ENCODE measurements at regions of chr7 and their contacts with region 1.

Region 1: GRCh38 chr7:39948956-39949928 is 814 bp upstream of the CDK13 start:
- DNase-seq: peak; percentile 95 to 100 (median 98)
- ATAC-seq: peak; percentile 77
- H3K4me3 ChIP-seq: peak overlapping the region; percentile 93
- H3K4me3 Mint-ChIP-seq: peak overlapping the region; percentile 95
- H3K27ac ChIP-seq: peak overlapping the region; percentile 98 to 99
- H3K27ac Mint-ChIP-seq: peak overlapping the region; percentile 96
- H3K4me1 ChIP-seq: peaks cover 14% of the 10 kb centered on the region
- H3K4me1 Mint-ChIP-seq: peaks cover 44% of the 10 kb centered on the region
- H3K27me3 ChIP-seq: no peaks in the 10 kb centered on the region
- H3K27me3 Mint-ChIP-seq: no peaks in the 10 kb centered on the region
- CTCF ChIP-seq: no peak

Region 2: GRCh38 chr7:39580149-39580874 is 368.9 kb before region 1 on chr7:
- CTCF ChIA-PET with region 1: interaction called, 3 read pairs
- POLR2A ChIA-PET with region 1: interaction called, 3 read pairs
- intact Hi-C with region 1: loop called in 1 of 2 experiments (anchors 10 kb)
- DNase-seq: peak; percentile 60 to 92 (median 70)
- ATAC-seq: peak; percentile 96
- H3K4me3 ChIP-seq: no peak overlapping the region
- H3K4me3 Mint-ChIP-seq: no peak overlapping the region
- H3K27ac ChIP-seq: no peak overlapping the region
- H3K27ac Mint-ChIP-seq: no peak overlapping the region
- H3K4me1 ChIP-seq: no peaks in the 10 kb centered on the region
- H3K4me1 Mint-ChIP-seq: peaks cover 9% of the 10 kb centered on the region
- H3K27me3 ChIP-seq: no peaks in the 10 kb centered on the region
- H3K27me3 Mint-ChIP-seq: no peaks in the 10 kb centered on the region
- CTCF ChIP-seq: peak; percentile 75

Region 3: DNA sequence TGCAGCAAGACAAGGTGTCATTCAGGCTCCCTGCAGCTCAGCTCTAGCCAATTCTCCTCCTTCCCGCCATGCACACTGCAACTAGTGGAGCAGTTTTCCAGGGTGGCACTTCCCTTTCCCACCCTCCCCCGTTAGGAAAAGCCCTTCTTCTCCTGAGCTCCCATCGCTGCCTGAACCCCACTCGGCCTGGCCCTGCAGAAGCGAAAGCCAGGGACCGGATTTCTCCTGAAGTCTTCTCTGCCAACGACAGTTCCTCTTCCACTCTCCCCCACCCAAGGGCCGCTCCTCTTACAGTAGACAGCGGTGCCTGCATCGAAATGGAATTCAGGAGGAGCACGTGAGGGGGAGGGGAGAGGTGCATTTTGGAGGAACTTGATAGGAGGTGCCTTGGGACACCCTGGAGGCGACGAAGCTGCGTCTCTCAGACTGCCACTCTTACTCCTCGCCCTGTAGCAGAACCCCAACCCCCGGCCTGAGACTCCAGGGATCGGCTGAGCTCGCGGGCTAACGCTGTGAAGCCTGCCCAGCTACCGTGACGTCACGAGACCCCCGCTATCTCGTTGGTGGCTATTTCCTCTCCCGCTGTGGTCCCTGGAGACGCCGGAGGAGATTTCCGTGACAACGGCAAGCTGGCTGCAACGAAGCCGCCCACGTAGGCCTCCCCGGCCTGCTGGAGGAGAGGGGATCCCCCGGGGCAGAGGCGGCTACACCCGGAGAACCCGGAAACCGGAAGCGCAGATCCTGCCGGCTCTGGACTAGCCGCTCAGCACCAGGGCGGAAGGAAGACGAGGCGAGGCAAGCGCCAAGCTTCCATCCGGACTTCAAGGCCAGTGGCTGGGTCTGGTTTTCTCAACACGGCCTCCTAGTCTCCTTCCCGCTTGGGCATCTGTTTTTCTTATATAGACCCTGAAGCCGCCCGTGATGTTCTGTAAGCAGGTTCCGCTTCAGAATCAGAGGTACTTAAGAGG is 216.1 kb before region 1 on chr7:
- CTCF ChIA-PET with region 1: no interaction called
- POLR2A ChIA-PET with region 1: interaction called, 11 read pairs
- intact Hi-C with region 1: loop called (anchors 2 to 5 kb)
- DNase-seq: peak; percentile 80 to 99 (median 92)
- ATAC-seq: peak; percentile 91
- H3K4me3 ChIP-seq: peak overlapping the region; percentile 73
- H3K4me3 Mint-ChIP-seq: peak overlapping the region; percentile 97
- H3K27ac ChIP-seq: peak overlapping the region; percentile 71 to 89
- H3K27ac Mint-ChIP-seq: peak overlapping the region; percentile 96
- H3K4me1 ChIP-seq: peaks cover 42% of the 10 kb centered on the region
- H3K4me1 Mint-ChIP-seq: peaks cover 41% of the 10 kb centered on the region
- H3K27me3 ChIP-seq: no peaks in the 10 kb centered on the region
- H3K27me3 Mint-ChIP-seq: no peaks in the 10 kb centered on the region
- CTCF ChIP-seq: no peak

Region 4: GRCh38 chr7:39880556-39880955 is 68.7 kb before region 1 on chr7:
- CTCF ChIA-PET with region 1: no interaction called
- POLR2A ChIA-PET with region 1: no interaction called
- intact Hi-C with region 1: no loop called
- DNase-seq: no peak
- ATAC-seq: no peak
- H3K4me3 ChIP-seq: no peak overlapping the region
- H3K4me3 Mint-ChIP-seq: no peak overlapping the region
- H3K27ac ChIP-seq: no peak overlapping the region
- H3K27ac Mint-ChIP-seq: no peak overlapping the region
- H3K4me1 ChIP-seq: no peaks in the 10 kb centered on the region
- H3K4me1 Mint-ChIP-seq: no peaks in the 10 kb centered on the region
- H3K27me3 ChIP-seq: no peaks in the 10 kb centered on the region
- H3K27me3 Mint-ChIP-seq: peaks cover 14% of the 10 kb centered on the region
- CTCF ChIP-seq: no peak

Region 5: GRCh38 chr7:39979406-39980073 is 30.3 kb after region 1 on chr7:
- CTCF ChIA-PET with region 1: interaction called, 5 read pairs
- POLR2A ChIA-PET with region 1: interaction called, 48 read pairs
- intact Hi-C with region 1: loop called in 1 of 2 experiments (anchors 2 kb)
- DNase-seq: peak in 9 of 14 experiments; percentile 8 to 82 (median 26)
- ATAC-seq: peak; percentile 86
- H3K4me3 ChIP-seq: no peak overlapping the region
- H3K4me3 Mint-ChIP-seq: no peak overlapping the region
- H3K27ac ChIP-seq: peak overlapping the region in 1 of 2 donors; percentile 41
- H3K27ac Mint-ChIP-seq: no peak overlapping the region
- H3K4me1 ChIP-seq: peaks cover 30% of the 10 kb centered on the region
- H3K4me1 Mint-ChIP-seq: peaks cover 15% of the 10 kb centered on the region
- H3K27me3 ChIP-seq: no peaks in the 10 kb centered on the region
- H3K27me3 Mint-ChIP-seq: no peaks in the 10 kb centered on the region
- CTCF ChIP-seq: no peak

Region 6: GRCh38 chr7:40033826-40034225 is 84.6 kb after region 1 on chr7:
- CTCF ChIA-PET with region 1: interaction called, 3 read pairs
- POLR2A ChIA-PET with region 1: interaction called, 3 read pairs
- intact Hi-C with region 1: loop called in 1 of 2 experiments (anchors 5 kb)
- DNase-seq: no peak
- ATAC-seq: no peak
- H3K4me3 ChIP-seq: no peak overlapping the region
- H3K4me3 Mint-ChIP-seq: no peak overlapping the region
- H3K27ac ChIP-seq: no peak overlapping the region
- H3K27ac Mint-ChIP-seq: peak overlapping the region; percentile 37
- H3K4me1 ChIP-seq: no peaks in the 10 kb centered on the region
- H3K4me1 Mint-ChIP-seq: peaks cover 31% of the 10 kb centered on the region
- H3K27me3 ChIP-seq: no peaks in the 10 kb centered on the region
- H3K27me3 Mint-ChIP-seq: no peaks in the 10 kb centered on the region
- CTCF ChIP-seq: no peak

Region 7: GRCh38 chr7:40134428-40135316 is 185.4 kb after region 1 on chr7 and contains the starts of genes MPLKIP and SUGCT:
- CTCF ChIA-PET with region 1: interaction called, 17 read pairs
- POLR2A ChIA-PET with region 1: interaction called, 41 read pairs
- intact Hi-C with region 1: loop called (anchors 1 kb)
- DNase-seq: peak; percentile 77 to 94 (median 84)
- ATAC-seq: peak; percentile 89
- H3K4me3 ChIP-seq: peak within 1 kb of the TSS; percentile 92
- H3K4me3 Mint-ChIP-seq: peak within 1 kb of the TSS; percentile 100
- H3K27ac ChIP-seq: peak within 1 kb of the TSS; percentile 86 to 89
- H3K27ac Mint-ChIP-seq: peak within 1 kb of the TSS; percentile 97
- H3K4me1 ChIP-seq: peaks cover 15% of the 10 kb centered on the region
- H3K4me1 Mint-ChIP-seq: peaks cover 43% of the 10 kb centered on the region
- H3K27me3 ChIP-seq: no peaks in the 10 kb centered on the region
- H3K27me3 Mint-ChIP-seq: peaks cover 3% of the 10 kb centered on the region
- CTCF ChIP-seq: peak; percentile 95
- total RNA-seq, gene MPLKIP: 14.3 to 14.9 TPM
- total RNA-seq, gene SUGCT: 0.95 to 1.2 TPM